ENCODE measurements at regions of chr12 and their contacts with region 1.

Region 1: DNA sequence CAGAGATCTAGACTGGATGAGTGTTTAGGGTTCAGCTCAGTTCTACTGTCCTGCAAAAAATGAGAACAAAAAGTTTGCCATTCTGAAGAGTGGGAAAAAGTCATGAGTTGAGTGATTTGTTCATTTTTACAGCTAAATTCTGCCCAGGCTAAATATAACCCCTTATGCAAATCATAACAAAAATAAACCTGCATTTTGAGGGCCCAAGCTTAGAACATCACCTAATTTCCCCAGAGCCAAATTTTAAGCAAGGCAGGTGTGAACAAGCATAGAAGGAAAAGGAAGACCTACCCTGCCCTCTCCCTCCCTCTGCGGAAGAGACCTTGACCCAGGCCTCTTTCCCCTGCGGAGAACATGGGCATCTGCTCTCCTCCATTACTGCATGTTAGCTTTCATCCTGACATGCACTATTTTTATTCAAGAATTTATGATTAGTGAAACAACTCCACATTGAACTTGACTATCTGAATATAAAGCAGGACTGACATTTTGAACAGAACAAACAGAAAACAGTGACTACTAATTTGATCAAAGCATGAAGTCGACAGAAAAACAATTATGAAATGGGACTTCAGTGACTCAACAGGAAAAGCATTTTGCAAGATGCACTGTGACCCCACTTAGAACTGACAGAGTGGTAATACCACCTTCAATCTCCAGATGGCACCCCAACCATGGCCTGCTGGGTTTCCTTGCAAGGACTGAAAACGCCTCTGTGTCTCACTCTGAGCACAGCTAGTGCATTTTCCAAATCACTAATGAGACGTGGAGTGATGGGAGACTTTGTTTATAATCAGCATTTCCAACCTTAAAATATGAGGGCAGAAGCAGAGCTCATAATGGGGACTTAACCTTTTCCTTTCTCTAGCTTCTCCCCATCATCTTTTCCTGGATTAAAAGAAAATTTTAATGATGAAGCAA is 30.9 kb upstream of the SELPLG start:
- DNase-seq: peak; percentile 75 to 85
- ATAC-seq: peak; percentile 91 to 95 (median 92)
- H3K4me3 ChIP-seq: no peak overlapping the region
- H3K27ac ChIP-seq: peak overlapping the region; percentile 86
- H3K4me1 ChIP-seq: peaks cover 58% of the 10 kb centered on the region
- H3K27me3 ChIP-seq: no peaks in the 10 kb centered on the region
- CTCF ChIP-seq: peak; percentile 94

Region 2: DNA sequence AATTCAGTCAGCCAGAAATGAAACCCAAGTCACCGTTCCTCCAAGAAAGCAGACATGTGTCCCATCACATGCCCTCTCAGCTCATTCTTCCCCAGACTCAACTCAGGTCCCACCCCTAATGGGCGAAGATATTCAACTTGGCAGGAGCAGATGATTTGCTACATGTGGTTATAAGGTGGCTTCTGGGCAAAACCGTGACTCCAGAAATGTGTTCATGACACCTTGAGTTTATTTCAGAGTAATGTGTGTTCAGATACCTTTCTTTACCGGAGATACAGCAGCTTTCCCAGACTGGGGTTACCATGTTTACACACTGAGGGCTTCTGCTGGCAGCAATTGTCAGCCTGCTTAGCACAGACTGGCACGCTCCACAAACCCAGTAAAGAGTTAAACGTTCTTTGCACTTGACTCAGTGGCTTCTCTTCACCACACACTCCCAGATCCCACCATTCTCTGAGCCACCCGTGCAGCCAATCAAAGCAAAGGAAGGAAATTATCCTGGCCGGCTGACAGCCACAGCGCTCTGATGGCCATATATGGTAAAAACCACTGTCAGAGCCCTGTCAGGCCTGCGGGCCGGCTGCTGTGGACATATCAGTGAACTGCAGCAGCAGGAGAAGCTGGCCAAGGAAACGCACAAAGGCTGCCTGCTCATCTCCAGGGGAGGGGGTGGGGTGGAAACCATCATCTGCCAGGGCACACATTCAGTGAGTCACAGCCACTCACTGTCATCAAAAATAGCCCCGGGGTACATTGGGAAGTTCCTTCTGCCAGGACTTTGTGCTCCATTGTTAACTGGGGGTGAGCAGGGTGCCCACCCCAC is 26.8 kb after region 1 on chr12:
- intact Hi-C with region 1: no loop called
- DNase-seq: peak; percentile 95 to 98
- ATAC-seq: peak; percentile 87 to 94 (median 88)
- H3K4me3 ChIP-seq: peak overlapping the region; percentile 55
- H3K27ac ChIP-seq: peak overlapping the region; percentile 95
- H3K4me1 ChIP-seq: peaks cover 86% of the 10 kb centered on the region
- H3K27me3 ChIP-seq: no peaks in the 10 kb centered on the region
- CTCF ChIP-seq: peak; percentile 44

Region 3: GRCh38 chr12:108788076-108788782 is 123.6 kb after region 1 on chr12:
- intact Hi-C with region 1: loop called in 1 of 2 experiments (anchors 5 kb)
- DNase-seq: peak in 1 of 2 donors; percentile 75
- ATAC-seq: peak; percentile 14 to 40 (median 16)
- H3K4me3 ChIP-seq: peak overlapping the region; percentile 2
- H3K27ac ChIP-seq: peak overlapping the region; percentile 80
- H3K4me1 ChIP-seq: peaks cover 50% of the 10 kb centered on the region
- H3K27me3 ChIP-seq: no peaks in the 10 kb centered on the region
- CTCF ChIP-seq: no peak

Region 4: DNA sequence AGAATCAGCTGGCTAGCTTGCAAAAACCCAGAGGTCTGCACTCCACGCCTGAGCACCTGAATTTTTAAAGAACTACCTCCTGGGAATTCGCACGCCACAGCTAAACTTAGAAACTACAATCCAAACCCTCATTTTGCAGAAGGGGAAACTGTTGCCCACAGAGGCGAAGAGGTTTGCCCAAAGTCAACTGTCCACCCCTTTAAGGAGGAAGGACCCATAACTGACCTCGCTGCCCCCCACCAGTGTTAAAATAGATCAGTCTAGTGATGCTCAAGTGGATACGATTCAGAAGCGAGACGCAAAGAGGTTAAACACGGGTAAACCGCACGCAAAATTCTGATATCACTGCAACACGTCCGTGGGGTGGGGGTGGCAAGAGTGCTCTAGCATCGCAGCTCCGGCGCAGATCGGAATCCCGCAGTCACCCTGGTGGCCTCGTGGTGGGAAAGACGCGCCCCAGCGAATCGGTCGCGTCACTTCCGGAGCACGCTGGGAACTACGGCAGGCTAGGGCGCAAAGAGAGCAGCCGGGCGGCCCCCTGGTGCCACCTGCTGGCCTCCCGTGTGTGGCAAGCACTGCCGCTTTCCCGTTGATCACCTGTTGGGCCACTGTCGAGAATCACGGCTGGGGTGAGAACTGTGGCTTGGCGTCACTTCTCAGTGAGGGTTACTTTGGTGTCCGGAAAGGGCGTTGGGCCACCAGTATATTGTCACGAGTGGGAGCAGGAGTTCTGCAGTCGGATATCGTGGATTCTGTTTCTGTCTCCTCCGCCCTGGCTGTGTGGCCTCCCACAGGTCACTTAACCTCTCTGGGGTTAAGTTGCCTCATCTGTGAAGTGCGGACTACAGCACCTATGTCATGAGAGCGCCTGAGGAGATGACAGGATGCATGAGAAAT is 428.7 kb after region 1 on chr12 and contains the start of gene ALKBH2:
- intact Hi-C with region 1: loop called in 1 of 2 experiments (anchors 10 kb)
- DNase-seq: peak; percentile 96 to 97
- ATAC-seq: peak; percentile 84 to 85 (median 84)
- H3K4me3 ChIP-seq: peak within 1 kb of the TSS; percentile 75
- H3K27ac ChIP-seq: peak within 1 kb of the TSS; percentile 82
- H3K4me1 ChIP-seq: peaks cover 13% of the 10 kb centered on the region
- H3K27me3 ChIP-seq: no peaks in the 10 kb centered on the region
- CTCF ChIP-seq: peak; percentile 97
- total RNA-seq, gene ALKBH2: 7.3 to 25.3 (median 17.7) TPM